Activated CD4-positive, alpha-beta memory T cell treated with anti-CD3 and anti-CD28 coated beads for 36 hours (primary cell): ENCODE measurements at regions of chr5 and their contacts with region 1.

Region 1: DNA sequence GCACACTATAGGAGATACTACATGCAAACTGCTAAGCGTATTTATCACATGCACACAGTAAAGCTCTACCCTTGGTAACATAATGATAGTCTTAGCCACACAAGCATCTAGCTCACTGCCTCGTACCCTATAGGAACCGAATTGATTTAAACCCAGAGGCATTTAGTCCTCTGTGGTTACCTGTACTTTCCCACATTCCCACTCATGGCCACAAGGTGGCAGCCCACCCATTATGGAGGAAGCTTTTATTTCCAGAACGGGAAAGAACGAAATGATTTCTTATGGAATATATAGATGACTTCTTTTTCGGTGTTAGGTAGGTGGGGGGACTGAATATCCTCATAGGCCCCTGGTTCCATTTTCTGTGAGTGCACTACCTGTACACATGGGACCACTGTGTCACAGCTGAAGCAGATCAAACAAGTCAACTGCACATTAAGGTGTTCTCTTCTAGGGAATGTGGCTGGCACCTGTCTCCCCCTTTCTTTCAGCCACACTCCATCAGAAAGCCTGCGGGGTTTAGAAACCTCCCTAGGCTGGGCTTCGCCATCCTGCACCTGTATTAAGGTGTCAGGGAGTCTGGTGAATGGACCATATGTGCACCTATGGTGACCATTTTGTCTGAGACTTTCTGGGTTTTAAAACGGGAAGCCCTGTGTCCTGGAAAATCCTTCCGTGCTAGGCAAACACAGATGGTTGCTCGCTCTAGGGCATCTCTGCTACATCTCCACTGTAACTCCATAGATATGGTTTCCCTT is 313.2 kb downstream of the SLIT3 start:
- DNase-seq: peak; percentile 69
- H3K4me3 Mint-ChIP-seq: no peak overlapping the region
- H3K27ac Mint-ChIP-seq: no peak overlapping the region
- H3K4me1 Mint-ChIP-seq: no peaks in the 10 kb centered on the region
- H3K27me3 Mint-ChIP-seq: peaks cover 6% of the 10 kb centered on the region

Region 2: DNA sequence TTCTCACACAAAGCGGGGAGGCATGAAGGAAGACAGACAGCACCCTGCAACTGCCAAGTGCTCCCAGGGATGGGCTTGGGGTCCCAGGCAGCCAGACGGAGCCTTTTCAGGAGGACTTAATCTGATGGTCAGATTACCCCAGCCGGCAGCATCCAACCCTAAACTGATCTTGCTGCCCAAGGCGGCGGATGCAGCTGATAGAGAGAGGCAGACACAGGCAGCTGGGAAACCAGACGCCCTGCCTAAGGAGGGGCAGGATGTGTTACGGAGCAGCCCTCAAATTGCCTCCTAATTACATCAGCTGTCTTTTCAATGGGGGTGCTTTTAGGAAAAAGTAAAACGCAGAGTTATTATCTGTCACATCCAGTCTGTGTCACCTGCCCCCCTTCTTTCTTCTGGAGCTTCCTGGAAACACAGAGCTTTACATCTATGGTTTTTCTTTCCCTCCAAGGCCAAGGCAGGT is 217.7 kb before region 1 on chr5:
- CTCF ChIA-PET with region 1: no interaction called
- POLR2A ChIA-PET with region 1: no interaction called
- intact Hi-C with region 1: no loop called
- DNase-seq: no peak
- H3K4me3 Mint-ChIP-seq: no peak overlapping the region
- H3K27ac Mint-ChIP-seq: no peak overlapping the region
- H3K4me1 Mint-ChIP-seq: no peaks in the 10 kb centered on the region
- H3K27me3 Mint-ChIP-seq: peaks cover 4% of the 10 kb centered on the region

Region 3: GRCh38 chr5:169013846-169014245 is 26.1 kb after region 1 on chr5:
- CTCF ChIA-PET with region 1: no interaction called
- POLR2A ChIA-PET with region 1: no interaction called
- intact Hi-C with region 1: no loop called
- DNase-seq: no peak
- H3K4me3 Mint-ChIP-seq: no peak overlapping the region
- H3K27ac Mint-ChIP-seq: no peak overlapping the region
- H3K4me1 Mint-ChIP-seq: no peaks in the 10 kb centered on the region
- H3K27me3 Mint-ChIP-seq: peaks cover 19% of the 10 kb centered on the region

Region 4: GRCh38 chr5:169064093-169064492 is 76.4 kb after region 1 on chr5:
- CTCF ChIA-PET with region 1: no interaction called
- POLR2A ChIA-PET with region 1: no interaction called
- intact Hi-C with region 1: no loop called
- DNase-seq: no peak
- H3K4me3 Mint-ChIP-seq: no peak overlapping the region
- H3K27ac Mint-ChIP-seq: no peak overlapping the region
- H3K4me1 Mint-ChIP-seq: no peaks in the 10 kb centered on the region
- H3K27me3 Mint-ChIP-seq: peaks cover 14% of the 10 kb centered on the region

Region 5: DNA sequence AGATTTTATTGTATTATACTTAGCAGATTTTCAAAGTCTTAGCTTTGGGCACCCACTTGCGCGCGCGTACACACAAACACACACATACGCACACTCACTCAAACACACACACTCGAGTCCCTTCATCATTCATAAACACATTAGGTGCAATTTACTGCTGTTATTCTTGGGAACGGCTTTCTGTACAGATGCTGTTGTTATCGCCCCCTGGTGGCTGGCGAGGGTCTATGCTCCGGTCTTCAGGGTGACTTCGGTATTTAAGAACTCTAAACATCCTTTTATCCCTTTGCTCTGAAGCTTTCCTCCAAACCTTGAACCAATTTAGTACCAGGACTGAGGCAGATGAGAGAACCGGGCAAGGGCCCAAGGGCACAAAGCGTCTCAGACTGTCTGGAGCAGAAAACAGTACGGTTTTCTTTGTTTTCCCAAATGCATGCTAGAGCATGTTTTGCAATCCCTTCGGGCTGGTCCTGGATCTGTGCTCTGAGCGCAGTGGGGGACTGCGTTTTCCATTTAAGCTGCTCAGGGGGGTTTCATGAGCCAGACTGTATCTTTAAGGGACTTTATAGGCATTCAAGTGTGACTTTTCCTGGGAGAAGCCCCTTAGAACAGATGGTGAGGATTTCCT is 314.9 kb after region 1 on chr5:
- CTCF ChIA-PET with region 1: interaction called, 4 read pairs
- POLR2A ChIA-PET with region 1: no interaction called
- intact Hi-C with region 1: loop called (anchors 1 kb)
- DNase-seq: peak; percentile 72
- H3K4me3 Mint-ChIP-seq: no peak overlapping the region
- H3K27ac Mint-ChIP-seq: no peak overlapping the region
- H3K4me1 Mint-ChIP-seq: peaks cover 14% of the 10 kb centered on the region
- H3K27me3 Mint-ChIP-seq: peaks cover 56% of the 10 kb centered on the region